Naive thymus-derived CD4-positive, alpha-beta T cell (primary cell): ENCODE measurements at regions of chr18 and their contacts with region 1.

Region 1: DNA sequence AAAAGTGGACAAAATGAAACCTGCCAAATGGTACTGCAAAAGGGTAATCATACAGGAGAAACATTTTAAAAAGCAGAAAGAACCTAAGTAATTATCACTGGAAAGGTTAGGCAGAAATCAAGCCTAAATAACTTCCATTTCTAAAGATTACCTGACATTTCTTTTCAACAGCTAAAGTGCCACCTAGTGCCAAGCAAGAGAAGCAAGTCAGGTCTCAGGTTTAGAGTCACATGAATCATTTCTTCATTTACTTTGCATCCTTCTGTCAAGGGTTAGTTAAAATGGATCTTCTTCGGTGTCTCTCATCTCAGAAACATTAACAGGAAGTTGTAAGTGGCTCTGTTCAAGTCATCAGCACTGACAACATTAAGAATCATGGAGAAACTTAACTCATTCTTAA is 90.3 kb downstream of the AKAIN1 start:
- DNase-seq: peak in 6 of 9 donors; percentile 21 to 56 (median 39)
- ATAC-seq: peak; percentile 57
- H3K4me3 ChIP-seq: no peak overlapping the region
- H3K4me3 Mint-ChIP-seq: peak overlapping the region in 1 of 10 donors; percentile 35
- H3K27ac ChIP-seq: no peak overlapping the region
- H3K27ac Mint-ChIP-seq: peak overlapping the region in 2 of 9 donors; percentile 41 to 45
- H3K4me1 ChIP-seq: no peaks in the 10 kb centered on the region
- H3K4me1 Mint-ChIP-seq: peaks cover 0 to 15% (median 7%) of the 10 kb centered on the region in 7 donors
- H3K27me3 ChIP-seq: no peaks in the 10 kb centered on the region
- H3K27me3 Mint-ChIP-seq: no peaks in the 10 kb centered on the region

Region 2: DNA sequence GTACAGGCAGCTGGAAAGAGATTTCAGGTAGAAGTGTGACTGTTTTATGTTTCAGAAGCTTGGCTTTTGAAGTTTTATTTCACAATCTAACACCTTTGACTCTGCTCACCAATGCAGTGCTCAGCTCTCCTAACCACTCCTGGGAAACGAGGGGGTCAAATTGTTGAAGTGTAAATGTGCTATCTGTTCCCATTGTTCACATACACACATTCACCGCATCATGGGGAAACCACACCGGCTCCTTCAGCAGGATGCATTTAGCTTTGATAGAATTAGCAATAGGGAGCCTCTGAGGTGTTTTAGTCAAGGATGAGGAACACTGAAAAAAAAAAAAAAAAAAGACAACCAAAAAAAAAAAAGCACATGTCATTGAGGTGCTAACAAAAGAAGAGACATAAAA is 638.2 kb before region 1 on chr18:
- CTCF ChIA-PET with region 1: no interaction called
- POLR2A ChIA-PET with region 1: no interaction called
- intact Hi-C with region 1: no loop called
- DNase-seq: no peak
- ATAC-seq: no peak
- H3K4me3 ChIP-seq: no peak overlapping the region
- H3K4me3 Mint-ChIP-seq: no peak overlapping the region
- H3K27ac ChIP-seq: no peak overlapping the region
- H3K27ac Mint-ChIP-seq: no peak overlapping the region
- H3K4me1 ChIP-seq: no peaks in the 10 kb centered on the region
- H3K4me1 Mint-ChIP-seq: no peaks in the 10 kb centered on the region
- H3K27me3 ChIP-seq: no peaks in the 10 kb centered on the region
- H3K27me3 Mint-ChIP-seq: peaks cover 0 to 3% (median 0%) of the 10 kb centered on the region in 5 donors

Region 3: GRCh38 chr18:5159080-5159479 is 52.4 kb after region 1 on chr18:
- CTCF ChIA-PET with region 1: no interaction called
- POLR2A ChIA-PET with region 1: no interaction called
- intact Hi-C with region 1: loop called in 1 of 2 experiments (anchors 5 kb)
- DNase-seq: peak in 7 of 9 donors; percentile 63 to 81 (median 76)
- ATAC-seq: peak; percentile 89
- H3K4me3 ChIP-seq: no peak overlapping the region
- H3K4me3 Mint-ChIP-seq: peak overlapping the region; percentile 11 to 92 (median 73)
- H3K27ac ChIP-seq: peak overlapping the region; percentile 53
- H3K27ac Mint-ChIP-seq: peak overlapping the region; percentile 43 to 97 (median 93)
- H3K4me1 ChIP-seq: peaks cover 0 to 45% of the 10 kb centered on the region in 2 donors
- H3K4me1 Mint-ChIP-seq: peaks cover 4 to 76% (median 61%) of the 10 kb centered on the region in 7 donors
- H3K27me3 ChIP-seq: no peaks in the 10 kb centered on the region
- H3K27me3 Mint-ChIP-seq: peaks cover 0 to 4% (median 0%) of the 10 kb centered on the region in 5 donors

Region 4: DNA sequence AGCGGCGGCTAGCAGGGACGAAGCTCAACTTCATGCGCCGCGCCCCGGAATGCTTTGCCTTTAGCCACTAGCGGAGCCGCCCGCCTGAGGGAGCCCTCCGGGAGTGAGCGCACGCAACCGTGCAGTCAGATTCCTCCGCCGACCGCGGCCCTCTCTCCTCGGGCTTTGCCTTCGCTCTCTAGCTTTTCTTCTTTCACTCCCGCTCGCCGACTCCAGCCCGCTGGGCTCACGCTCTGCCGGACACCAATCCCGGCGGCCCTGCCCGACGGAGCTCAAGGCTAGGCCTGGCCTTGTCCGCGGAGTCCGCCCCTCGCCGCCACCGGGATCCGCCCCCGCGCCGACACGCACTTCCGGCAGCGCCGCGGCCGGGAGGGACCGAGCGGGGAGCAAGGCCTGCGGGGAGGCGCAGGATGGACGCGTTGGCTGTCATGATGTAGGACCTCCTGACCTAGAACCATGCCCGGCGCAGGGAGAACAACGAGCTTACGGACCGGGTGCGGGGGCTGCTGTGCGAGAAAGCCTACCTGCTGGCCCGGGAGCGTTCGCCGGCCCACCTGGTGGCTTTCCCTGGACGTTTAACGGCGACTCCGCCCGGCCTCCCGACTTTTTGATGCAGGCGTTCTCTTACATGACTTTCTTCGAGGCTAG is 131.1 kb after region 1 on chr18:
- CTCF ChIA-PET with region 1: interaction called, 3 read pairs
- POLR2A ChIA-PET with region 1: interaction called, 4 read pairs
- intact Hi-C with region 1: loop called in 1 of 2 experiments (anchors 1 kb)
- DNase-seq: peak; percentile 81 to 97 (median 92)
- ATAC-seq: peak; percentile 93
- H3K4me3 ChIP-seq: peak overlapping the region; percentile 89
- H3K4me3 Mint-ChIP-seq: peak overlapping the region; percentile 93 to 98 (median 96)
- H3K27ac ChIP-seq: peak overlapping the region; percentile 90
- H3K27ac Mint-ChIP-seq: peak overlapping the region; percentile 97 to 99 (median 98)
- H3K4me1 ChIP-seq: peaks cover 13 to 16% of the 10 kb centered on the region in 2 donors
- H3K4me1 Mint-ChIP-seq: peaks cover 16 to 76% (median 45%) of the 10 kb centered on the region in 7 donors
- H3K27me3 ChIP-seq: no peaks in the 10 kb centered on the region
- H3K27me3 Mint-ChIP-seq: peaks cover 0 to 7% (median 0%) of the 10 kb centered on the region in 5 donors

Region 5: GRCh38 chr18:5444847-5445246 is 338.1 kb after region 1 on chr18:
- CTCF ChIA-PET with region 1: no interaction called
- POLR2A ChIA-PET with region 1: no interaction called
- intact Hi-C with region 1: loop called in 1 of 2 experiments (anchors 2 kb)
- DNase-seq: no peak
- ATAC-seq: no peak
- H3K4me3 ChIP-seq: no peak overlapping the region
- H3K4me3 Mint-ChIP-seq: no peak overlapping the region
- H3K27ac ChIP-seq: no peak overlapping the region
- H3K27ac Mint-ChIP-seq: no peak overlapping the region
- H3K4me1 ChIP-seq: no peaks in the 10 kb centered on the region
- H3K4me1 Mint-ChIP-seq: peaks cover 0 to 10% (median 0%) of the 10 kb centered on the region in 7 donors
- H3K27me3 ChIP-seq: no peaks in the 10 kb centered on the region
- H3K27me3 Mint-ChIP-seq: no peaks in the 10 kb centered on the region

Region 6: DNA sequence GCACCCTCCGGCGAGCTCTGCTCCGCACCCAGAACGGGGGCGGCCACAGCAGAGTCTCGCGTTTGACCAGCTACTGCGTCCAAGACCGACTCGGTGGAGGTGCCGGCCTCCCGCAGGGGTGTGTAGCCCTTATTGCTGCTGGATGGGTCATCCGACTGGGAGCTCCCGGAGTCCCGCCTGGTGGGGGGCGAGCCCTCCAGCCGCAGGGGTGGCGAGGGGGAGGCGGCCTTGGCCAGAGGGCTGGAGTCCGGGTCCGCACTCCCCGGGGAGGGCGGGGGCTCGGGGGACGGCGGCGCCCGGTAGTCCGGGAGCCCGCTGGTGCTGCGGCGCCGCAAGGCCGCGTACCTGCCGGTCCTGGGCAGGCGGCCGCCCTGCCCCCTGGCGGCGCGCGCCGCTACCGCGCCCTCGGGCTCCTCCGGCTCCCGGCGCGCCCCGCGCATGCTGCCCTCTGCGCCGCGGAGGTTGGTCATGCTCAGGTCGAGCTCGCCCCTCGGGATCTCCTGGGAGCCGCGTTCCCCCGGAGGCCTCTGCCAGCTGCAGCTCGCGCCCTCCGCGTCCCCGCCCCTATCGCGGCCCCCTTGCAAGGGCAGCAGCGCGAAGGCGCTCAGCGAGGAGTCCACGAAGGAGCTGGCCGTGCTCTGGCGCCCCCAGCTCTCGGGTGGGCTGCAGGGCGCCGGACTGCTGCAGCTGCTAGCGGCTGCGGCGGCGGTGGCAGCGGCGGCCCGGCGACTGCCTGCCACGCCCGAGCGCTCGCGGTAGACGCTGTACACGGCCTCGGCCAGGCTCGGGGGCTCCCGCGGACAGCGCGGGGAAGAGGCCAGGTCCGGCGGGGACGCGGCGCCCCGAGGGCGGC is 783.8 kb after region 1 on chr18:
- CTCF ChIA-PET with region 1: no interaction called
- POLR2A ChIA-PET with region 1: no interaction called
- intact Hi-C with region 1: loop called in 1 of 2 experiments (anchors 1 kb)
- DNase-seq: peak in 6 of 9 donors; percentile 11 to 32 (median 24)
- ATAC-seq: peak; percentile 77
- H3K4me3 ChIP-seq: no peak overlapping the region
- H3K4me3 Mint-ChIP-seq: peak overlapping the region in 7 of 10 donors; percentile 7 to 78 (median 27)
- H3K27ac ChIP-seq: no peak overlapping the region
- H3K27ac Mint-ChIP-seq: no peak overlapping the region
- H3K4me1 ChIP-seq: peaks cover 0 to 4% of the 10 kb centered on the region in 2 donors
- H3K4me1 Mint-ChIP-seq: peaks cover 0 to 23% (median 12%) of the 10 kb centered on the region in 7 donors
- H3K27me3 ChIP-seq: peaks cover 3% of the 10 kb centered on the region in 2 donors
- H3K27me3 Mint-ChIP-seq: peaks cover 60 to 70% (median 63%) of the 10 kb centered on the region in 5 donors